ENCODE measurements at regions of chr15 and their contacts with region 1.

Region 1: DNA sequence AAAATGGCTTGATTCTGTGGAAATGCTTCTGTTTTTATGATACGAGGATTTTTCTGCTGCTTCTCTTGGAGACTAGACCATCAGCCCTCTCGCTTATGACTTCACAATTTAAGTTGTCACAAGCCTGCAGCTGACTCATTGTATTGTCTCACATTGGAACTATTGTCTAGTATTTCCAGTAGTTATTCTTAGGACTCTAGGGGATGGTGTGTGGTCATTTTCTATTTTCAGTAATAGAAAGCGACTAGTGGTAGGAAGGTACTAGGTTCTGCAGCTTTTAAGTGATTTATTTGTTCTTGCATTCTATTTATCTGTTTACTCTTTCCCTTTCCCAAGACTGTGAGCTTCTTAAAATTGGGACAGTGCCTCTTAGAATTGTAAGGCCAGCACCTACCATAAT is 66.3 kb upstream of the CRTC3 start:
- ATAC-seq: peak in 7 of 8 experiments; percentile 77 to 96 (median 94)
- H3K4me3 ChIP-seq: no peak overlapping the region
- H3K27ac ChIP-seq: no peak overlapping the region
- H3K4me1 ChIP-seq: peaks cover 3 to 7% of the 10 kb centered on the region in 2 donors

Region 2: GRCh38 chr15:90336705-90337141 is 126.7 kb before region 1 on chr15:
- in situ Hi-C with region 1: loop called in 1 of 9 experiments (anchors 25 kb)
- ATAC-seq: peak in 1 of 8 experiments; percentile 33
- H3K4me3 ChIP-seq: no peak overlapping the region
- H3K27ac ChIP-seq: no peak overlapping the region
- H3K4me1 ChIP-seq: peaks cover 0 to 8% of the 10 kb centered on the region in 2 donors

Region 3: GRCh38 chr15:90362936-90363212 is 100.5 kb before region 1 on chr15:
- in situ Hi-C with region 1: no loop called
- ATAC-seq: peak; percentile 72 to 91 (median 79)
- H3K4me3 ChIP-seq: no peak overlapping the region
- H3K27ac ChIP-seq: peak overlapping the region; percentile 21 to 39
- H3K4me1 ChIP-seq: peaks cover 5 to 9% of the 10 kb centered on the region in 2 donors

Region 4: DNA sequence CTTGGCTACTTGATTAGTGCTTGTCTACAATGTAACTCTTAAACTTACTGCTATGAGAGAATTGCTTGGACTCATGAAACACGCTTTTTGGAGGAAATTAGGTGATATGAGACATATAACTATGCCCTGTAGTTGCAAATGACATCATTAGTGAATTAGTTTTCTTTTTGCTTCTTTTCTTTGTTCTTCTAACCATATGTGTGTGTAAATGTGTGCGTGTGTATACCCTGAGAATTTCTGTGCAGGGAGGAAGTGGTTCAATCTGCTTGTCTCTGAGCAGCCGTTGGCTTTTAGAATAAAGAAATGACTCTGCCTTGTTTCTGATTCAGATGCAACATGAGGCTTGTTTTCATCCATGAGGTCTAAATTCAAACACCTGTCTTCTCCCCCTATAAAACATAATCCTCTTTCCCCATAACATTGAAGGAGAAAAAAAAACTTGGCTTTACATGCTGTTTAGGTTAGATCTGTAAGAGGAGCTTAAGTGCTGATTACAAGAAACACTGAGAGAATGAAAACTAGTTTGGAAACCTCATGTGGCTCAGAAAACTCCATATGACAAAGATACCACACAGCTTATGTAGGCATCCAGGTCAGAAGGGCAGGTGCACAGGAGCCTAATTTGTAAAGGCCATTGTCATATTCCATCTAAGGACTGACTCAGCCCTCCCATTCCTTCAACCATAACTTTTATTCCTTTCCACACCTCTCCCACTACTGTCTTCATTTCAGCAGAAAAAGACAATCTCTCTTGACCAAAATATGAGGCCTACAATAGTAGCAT is 223.2 kb after region 1 on chr15:
- in situ Hi-C with region 1: no loop called
- ATAC-seq: no peak
- H3K4me3 ChIP-seq: no peak overlapping the region
- H3K27ac ChIP-seq: no peak overlapping the region
- H3K4me1 ChIP-seq: no peaks in the 10 kb centered on the region